ENCODE measurements at regions of chr4 and their contacts with region 1.

Region 1: GRCh38 chr4:53929955-53930798 is 134.2 kb downstream of the CHIC2 start:
- DNase-seq: peak; percentile 83
- H3K4me3 Mint-ChIP-seq: no peak overlapping the region
- H3K27ac Mint-ChIP-seq: no peak overlapping the region
- H3K4me1 Mint-ChIP-seq: peaks cover 14% of the 10 kb centered on the region
- H3K27me3 Mint-ChIP-seq: no peaks in the 10 kb centered on the region
- CTCF ChIP-seq: peak; percentile 71

Region 2: GRCh38 chr4:53914313-53915016 is 15.7 kb before region 1 on chr4:
- CTCF ChIA-PET with region 1: interaction called, 84 read pairs
- POLR2A ChIA-PET with region 1: interaction called, 5 read pairs
- intact Hi-C with region 1: no loop called
- DNase-seq: peak; percentile 81
- H3K4me3 Mint-ChIP-seq: no peak overlapping the region
- H3K27ac Mint-ChIP-seq: peak overlapping the region; percentile 64
- H3K4me1 Mint-ChIP-seq: peaks cover 53% of the 10 kb centered on the region
- H3K27me3 Mint-ChIP-seq: no peaks in the 10 kb centered on the region
- CTCF ChIP-seq: no peak

Region 3: DNA sequence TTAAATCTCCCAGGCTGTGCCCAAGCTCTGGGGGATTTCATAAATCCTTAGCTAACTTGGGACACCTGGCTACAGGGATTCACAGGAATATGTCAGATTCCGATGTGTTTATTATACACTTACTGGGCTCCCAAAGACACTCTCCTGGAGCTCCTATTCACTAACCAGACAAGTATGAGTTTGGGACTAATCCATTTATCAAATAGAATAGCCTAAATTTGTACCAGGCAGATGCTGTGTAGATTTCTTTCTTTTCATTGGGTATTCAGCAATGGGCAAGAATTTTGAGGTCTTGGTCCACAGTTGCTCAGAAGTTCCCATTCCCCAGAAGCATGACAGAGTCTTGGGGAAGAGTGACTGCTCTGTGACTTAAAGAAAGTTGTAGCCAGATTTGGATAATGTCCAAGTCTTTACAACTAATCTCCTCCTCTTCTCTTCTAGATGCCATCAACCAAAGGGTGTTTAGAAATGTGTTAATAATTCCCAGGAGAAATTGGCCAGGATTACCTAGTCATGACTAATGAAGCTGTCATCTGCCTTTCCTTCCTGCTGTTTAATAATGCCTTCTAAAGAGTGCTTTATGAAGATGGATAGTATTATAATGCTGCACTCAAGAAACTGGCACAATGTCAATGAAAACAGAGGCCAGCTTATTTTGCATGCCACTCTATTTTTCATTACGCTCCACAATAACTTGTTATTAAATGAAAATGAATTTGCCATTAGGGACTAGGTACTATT is 13.3 kb after region 1 on chr4:
- CTCF ChIA-PET with region 1: interaction called, 19 read pairs
- POLR2A ChIA-PET with region 1: interaction called, 11 read pairs
- intact Hi-C with region 1: no loop called
- DNase-seq: peak; percentile 95
- H3K4me3 Mint-ChIP-seq: no peak overlapping the region
- H3K27ac Mint-ChIP-seq: peak overlapping the region; percentile 57
- H3K4me1 Mint-ChIP-seq: peaks cover 15% of the 10 kb centered on the region
- H3K27me3 Mint-ChIP-seq: no peaks in the 10 kb centered on the region
- CTCF ChIP-seq: no peak

Region 4: DNA sequence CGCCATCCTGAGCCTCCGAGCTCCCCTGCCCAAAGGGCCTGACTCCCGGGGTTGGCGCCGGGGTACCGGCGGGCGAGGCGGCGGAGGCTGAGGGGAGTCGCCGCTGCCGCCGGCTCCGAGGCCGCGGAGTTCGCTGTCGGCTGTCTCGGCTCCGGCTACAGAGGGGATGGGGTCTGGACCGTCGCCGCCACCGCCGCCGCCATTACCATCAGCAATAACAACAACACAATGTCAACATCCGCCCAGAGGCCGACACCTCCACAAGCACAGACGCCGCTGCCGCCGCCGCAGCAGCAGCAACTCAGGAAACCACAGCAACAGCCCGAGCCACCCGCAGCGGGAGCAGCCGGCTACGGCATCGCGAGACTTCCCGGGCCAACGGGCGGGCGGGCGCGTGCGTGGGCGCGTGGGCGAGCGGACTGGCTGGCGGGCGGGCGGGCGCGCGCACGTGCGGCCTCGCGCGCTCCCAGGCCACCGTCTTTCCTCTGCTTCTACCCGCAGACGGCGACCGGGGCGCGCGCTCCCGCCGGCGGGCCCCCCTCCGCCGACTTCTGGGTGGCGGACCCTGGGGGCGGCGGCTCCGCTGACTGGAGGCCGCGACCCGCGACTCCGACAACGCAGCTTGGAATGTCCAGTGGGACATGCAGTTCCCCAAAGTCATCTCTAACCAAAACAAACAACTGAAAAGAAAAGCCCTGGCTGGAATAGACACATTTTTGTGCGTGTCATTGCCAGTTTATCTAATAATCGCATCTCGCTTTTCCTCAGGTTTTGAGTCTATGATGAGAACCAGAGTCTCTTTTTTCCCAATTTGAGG is 134.3 kb after region 1 on chr4 and contains the start of gene CHIC2:
- CTCF ChIA-PET with region 1: interaction called, 15 read pairs
- POLR2A ChIA-PET with region 1: interaction called, 15 read pairs
- intact Hi-C with region 1: loop called (anchors 5 kb)
- DNase-seq: peak; percentile 88
- H3K4me3 Mint-ChIP-seq: peak within 1 kb of the TSS; percentile 89
- H3K27ac Mint-ChIP-seq: peak within 1 kb of the TSS; percentile 97
- H3K4me1 Mint-ChIP-seq: peaks cover 44% of the 10 kb centered on the region
- H3K27me3 Mint-ChIP-seq: no peaks in the 10 kb centered on the region
- CTCF ChIP-seq: no peak
- total RNA-seq, gene CHIC2: 59.4 and 59.6 TPM in 2 replicates

Region 5: GRCh38 chr4:54165438-54165837 is 235.3 kb after region 1 on chr4:
- CTCF ChIA-PET with region 1: no interaction called
- POLR2A ChIA-PET with region 1: no interaction called
- intact Hi-C with region 1: loop called (anchors 1 kb)
- DNase-seq: peak; percentile 65
- H3K4me3 Mint-ChIP-seq: no peak overlapping the region
- H3K27ac Mint-ChIP-seq: peak overlapping the region; percentile 2
- H3K4me1 Mint-ChIP-seq: peaks cover 13% of the 10 kb centered on the region
- H3K27me3 Mint-ChIP-seq: no peaks in the 10 kb centered on the region
- CTCF ChIP-seq: no peak